Naive thymus-derived CD8-positive, alpha-beta T cell (primary cell): ENCODE measurements at regions of chr3 and their contacts with region 1.

Region 1: GRCh38 chr3:114442246-114442645 is 148.4 kb downstream of the TIGIT start:
- DNase-seq: no peak
- ATAC-seq: no peak
- H3K4me3 Mint-ChIP-seq: no peak overlapping the region
- H3K27ac Mint-ChIP-seq: no peak overlapping the region
- H3K4me1 Mint-ChIP-seq: peaks cover 2 to 15% (median 3%) of the 10 kb centered on the region in 4 donors
- H3K27me3 Mint-ChIP-seq: no peaks in the 10 kb centered on the region

Region 2: DNA sequence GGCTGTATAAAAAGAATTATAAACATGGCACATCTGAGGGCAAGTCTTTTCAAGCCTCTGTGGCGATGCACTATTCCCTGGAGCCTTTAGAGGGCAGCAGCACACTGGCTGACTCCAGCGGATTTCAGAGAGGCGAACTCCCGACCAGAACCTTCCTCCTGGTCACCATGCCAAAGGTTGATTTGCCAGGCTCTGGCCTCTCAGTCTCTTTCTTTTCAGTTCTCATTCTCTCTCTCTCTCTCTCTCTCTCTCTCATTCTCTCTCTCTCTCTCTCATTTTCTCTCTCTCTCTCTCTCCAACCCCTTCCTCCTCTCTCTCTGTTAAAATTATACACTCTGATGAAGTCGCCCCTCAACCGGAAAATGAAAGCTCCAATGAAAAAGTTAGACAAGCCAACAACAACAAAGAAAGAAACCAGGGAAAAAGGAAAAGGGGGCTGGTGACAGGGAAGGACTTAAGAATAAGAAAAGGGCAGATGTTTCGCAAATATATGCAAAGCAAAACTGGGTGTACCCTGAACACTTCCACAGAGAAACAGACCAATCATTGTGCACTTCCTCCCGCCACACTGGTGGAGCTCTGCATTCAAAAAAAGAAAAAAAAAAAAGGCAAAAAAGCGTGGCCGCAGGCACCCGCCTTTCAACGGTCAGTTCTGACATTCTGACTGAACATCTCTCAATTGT is 58.2 kb before region 1 on chr3:
- POLR2A ChIA-PET with region 1: no interaction called
- DNase-seq: peak; percentile 20 to 75 (median 48)
- ATAC-seq: peak; percentile 92 to 93
- H3K4me3 Mint-ChIP-seq: peak overlapping the region in 8 of 10 donors; percentile 77 to 89 (median 82)
- H3K27ac Mint-ChIP-seq: peak overlapping the region in 5 of 10 donors; percentile 2 to 72 (median 57)
- H3K4me1 Mint-ChIP-seq: peaks cover 8 to 20% (median 14%) of the 10 kb centered on the region in 4 donors
- H3K27me3 Mint-ChIP-seq: no peaks in the 10 kb centered on the region

Region 3: GRCh38 chr3:114469070-114469469 is 26.8 kb after region 1 on chr3:
- POLR2A ChIA-PET with region 1: interaction called, 10 read pairs
- DNase-seq: no peak
- ATAC-seq: no peak
- H3K4me3 Mint-ChIP-seq: no peak overlapping the region
- H3K27ac Mint-ChIP-seq: no peak overlapping the region
- H3K4me1 Mint-ChIP-seq: peaks cover 0 to 11% (median 4%) of the 10 kb centered on the region in 4 donors
- H3K27me3 Mint-ChIP-seq: no peaks in the 10 kb centered on the region